A549 (cell line): ENCODE measurements at regions of chr5 and their contacts with region 1.

Region 1: DNA sequence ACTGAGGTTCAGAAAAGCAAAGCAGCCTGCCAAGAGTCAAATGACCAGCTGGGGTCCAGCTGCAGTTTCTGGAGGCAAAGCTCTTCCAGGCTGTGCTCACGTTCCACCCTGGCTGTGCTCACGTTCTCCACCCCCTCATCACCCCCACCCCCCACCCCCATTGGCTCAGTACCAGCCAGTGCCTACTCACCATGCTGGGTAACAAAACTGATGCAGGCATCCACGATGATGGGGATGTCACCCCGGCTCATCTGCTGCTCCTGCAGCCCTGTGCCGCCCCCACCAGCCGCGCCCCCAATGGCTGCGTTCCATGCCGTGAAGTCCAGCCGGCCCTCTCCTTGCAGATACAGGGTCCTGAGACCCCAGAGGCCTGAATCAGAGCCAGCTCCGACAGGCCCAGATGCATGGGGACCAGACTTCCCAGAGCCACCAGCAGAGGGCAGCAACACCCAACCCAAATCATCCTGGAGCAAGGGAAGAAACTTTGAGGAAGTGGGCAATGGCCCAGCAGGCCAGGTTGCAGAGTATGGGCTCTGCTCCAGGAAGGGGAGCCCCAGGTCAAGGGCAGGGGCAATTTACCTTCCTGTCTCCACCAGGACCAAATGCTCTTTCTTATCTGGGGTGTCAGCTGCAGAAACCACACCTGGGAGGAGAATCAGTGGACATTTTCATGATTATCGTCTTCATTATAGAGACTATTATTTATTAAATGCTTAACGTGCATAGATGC is 13.7 kb upstream of the FCHSD1 start:
- DNase-seq: peak; percentile 69 to 78
- ATAC-seq: peak; percentile 89 to 97
- H3K4me3 ChIP-seq: no peak overlapping the region
- H3K27ac ChIP-seq: no peak overlapping the region
- H3K4me1 ChIP-seq: peaks cover 4% of the 10 kb centered on the region; the same call in 1 of the 3 replicates
- CTCF ChIP-seq: peak; percentile 91
- EP300 ChIP-seq: no peak
- POLR2A ChIP-seq: no peak
- RAD21 ChIP-seq: peak; percentile 84

Region 2: DNA sequence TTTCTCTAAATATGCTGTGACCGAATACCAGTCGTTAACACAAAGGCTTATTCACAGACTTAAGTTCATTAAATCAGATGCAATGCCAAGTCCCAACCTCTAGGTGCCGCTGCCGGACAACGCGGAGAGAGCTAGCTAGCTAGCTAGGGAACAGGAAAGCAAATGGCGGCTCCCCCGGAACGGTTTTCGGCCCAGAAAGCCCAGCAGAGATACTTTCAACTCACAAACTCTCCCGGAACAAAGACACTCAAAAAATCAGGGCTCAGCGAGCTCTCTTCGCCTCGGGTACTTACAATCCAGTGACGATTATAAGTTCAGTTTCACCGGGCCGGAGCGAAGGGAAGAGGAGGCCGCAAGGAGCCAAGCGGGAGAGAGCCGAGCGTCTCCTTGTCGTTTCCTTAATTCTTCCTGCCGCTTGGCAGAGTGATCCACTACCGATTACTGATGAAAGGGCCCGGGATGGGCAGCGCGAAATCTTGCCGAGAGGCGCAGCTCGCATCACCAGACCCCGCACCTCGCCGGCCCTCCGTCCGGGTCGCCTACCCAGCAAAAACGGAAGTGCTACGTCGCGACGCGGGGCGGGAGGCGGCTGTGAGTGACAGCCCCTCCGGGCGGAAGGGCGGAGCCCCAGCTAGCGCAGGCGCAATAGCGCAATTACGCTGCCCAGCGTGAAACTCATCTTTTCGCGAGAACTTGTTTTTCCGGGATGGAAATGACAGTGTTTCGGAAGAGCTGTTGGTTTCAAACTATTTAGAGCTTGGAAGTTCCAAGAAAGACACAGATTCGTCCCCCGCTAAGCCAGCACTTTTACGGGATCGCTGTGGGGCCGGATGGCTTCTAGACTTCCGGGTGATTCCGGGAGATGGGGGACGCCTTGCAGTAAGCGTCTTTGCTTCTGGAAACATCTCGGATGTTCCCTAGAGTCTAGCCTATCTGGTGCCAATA is 344.4 kb before region 1 on chr5 and contains the start of gene TAF7:
- CTCF ChIA-PET with region 1: no interaction called
- POLR2A ChIA-PET with region 1: no interaction called
- DNase-seq: peak; percentile 75 to 96
- ATAC-seq: peak; percentile 97 to 98
- H3K4me3 ChIP-seq: peak within 1 kb of the TSS; percentile 68
- H3K27ac ChIP-seq: peak within 1 kb of the TSS; percentile 84 to 93
- H3K4me1 ChIP-seq: no peaks in the 10 kb centered on the region
- CTCF ChIP-seq: peak; percentile 78
- EP300 ChIP-seq: no peak
- POLR2A ChIP-seq: peak; percentile 79
- RAD21 ChIP-seq: no peak; a peak in 1 of 5 replicates
- polyA plus RNA-seq, gene TAF7: 78.1 and 90.6 TPM in 2 replicates

Region 3: DNA sequence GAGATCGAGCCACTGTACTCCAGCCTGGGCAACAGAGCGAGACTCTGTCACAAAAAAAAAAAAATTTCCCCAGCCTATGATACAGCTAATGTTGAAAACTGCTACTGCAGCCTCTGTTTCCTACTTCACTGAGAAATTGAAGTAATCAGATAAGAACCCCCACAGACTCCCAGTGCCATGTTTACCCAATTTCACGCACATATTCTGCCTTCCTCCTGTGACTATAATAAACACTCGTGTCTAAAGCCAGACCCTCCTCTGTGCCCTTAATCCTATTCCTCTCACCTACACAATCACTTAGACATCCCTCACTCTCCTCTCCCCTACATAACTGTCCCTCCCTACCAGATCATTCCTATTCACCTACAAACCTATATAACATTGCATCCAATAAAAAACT is 10.8 kb after region 1 on chr5:
- CTCF ChIA-PET with region 1: interaction called, 41 read pairs
- POLR2A ChIA-PET with region 1: no interaction called
- DNase-seq: no peak
- ATAC-seq: no peak
- H3K4me3 ChIP-seq: no peak overlapping the region
- H3K27ac ChIP-seq: no peak overlapping the region
- H3K4me1 ChIP-seq: peaks cover 2% of the 10 kb centered on the region
- CTCF ChIP-seq: no peak
- EP300 ChIP-seq: no peak
- POLR2A ChIP-seq: no peak
- RAD21 ChIP-seq: no peak

Region 4: DNA sequence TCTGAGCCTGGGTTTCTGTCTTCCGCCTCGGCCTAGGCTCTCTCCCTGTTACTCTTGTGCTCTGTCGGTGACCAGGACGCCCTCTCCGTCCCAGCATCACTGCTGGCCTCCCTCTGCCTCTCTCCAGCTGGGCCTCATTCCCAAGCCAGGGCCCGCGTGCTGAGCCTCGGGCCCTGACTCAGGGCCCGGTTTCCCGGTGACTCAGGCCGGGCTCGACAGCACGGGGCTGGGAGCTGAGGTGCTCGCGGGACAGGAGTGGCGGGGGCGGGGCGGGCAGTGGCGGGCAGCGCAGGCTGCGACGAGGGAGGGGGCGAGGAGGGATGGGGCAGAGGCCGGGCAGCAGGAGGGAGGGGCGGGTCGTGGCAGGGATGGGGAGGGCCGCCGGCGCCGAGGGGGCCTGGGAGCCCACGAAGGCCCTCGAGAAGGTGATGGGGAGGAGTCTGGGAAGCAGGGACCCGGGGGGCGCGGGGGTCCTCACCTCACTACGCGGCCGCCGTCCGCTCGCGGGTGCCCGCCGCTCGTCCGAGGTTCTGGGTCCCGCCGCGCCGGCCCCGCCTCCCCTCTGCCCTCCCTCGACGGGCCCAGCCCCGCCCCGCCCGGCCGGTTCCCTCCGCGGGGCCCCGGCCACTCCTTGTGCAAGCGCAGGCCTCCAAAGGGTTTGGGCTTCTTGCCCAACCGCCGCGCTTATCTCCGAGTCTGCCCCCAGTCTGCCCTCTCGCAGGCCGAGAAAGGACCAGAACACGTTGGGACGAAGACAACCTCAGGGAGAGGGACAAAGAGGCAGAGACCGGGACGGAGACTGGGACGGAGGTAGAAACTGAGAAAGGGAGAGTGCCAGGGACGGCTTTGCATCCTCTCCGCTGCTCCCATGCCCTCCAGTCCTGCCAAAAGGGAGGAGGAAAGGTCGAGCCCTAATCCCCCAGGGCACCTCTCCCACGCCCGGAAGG is 17.1 kb after region 1 on chr5 and contains the start of gene ARAP3:
- CTCF ChIA-PET with region 1: interaction called, 41 read pairs
- POLR2A ChIA-PET with region 1: no interaction called
- DNase-seq: peak; percentile 69 to 75
- ATAC-seq: peak; percentile 87 to 93
- H3K4me3 ChIP-seq: peak within 1 kb of the TSS; percentile 49
- H3K27ac ChIP-seq: peak within 1 kb of the TSS; percentile 88 to 98
- H3K4me1 ChIP-seq: peaks cover 24% of the 10 kb centered on the region
- CTCF ChIP-seq: no peak
- EP300 ChIP-seq: no peak
- POLR2A ChIP-seq: peak; percentile 40
- RAD21 ChIP-seq: no peak
- polyA plus RNA-seq, gene ARAP3: 3.0 and 4.5 TPM in 2 replicates

Region 5: DNA sequence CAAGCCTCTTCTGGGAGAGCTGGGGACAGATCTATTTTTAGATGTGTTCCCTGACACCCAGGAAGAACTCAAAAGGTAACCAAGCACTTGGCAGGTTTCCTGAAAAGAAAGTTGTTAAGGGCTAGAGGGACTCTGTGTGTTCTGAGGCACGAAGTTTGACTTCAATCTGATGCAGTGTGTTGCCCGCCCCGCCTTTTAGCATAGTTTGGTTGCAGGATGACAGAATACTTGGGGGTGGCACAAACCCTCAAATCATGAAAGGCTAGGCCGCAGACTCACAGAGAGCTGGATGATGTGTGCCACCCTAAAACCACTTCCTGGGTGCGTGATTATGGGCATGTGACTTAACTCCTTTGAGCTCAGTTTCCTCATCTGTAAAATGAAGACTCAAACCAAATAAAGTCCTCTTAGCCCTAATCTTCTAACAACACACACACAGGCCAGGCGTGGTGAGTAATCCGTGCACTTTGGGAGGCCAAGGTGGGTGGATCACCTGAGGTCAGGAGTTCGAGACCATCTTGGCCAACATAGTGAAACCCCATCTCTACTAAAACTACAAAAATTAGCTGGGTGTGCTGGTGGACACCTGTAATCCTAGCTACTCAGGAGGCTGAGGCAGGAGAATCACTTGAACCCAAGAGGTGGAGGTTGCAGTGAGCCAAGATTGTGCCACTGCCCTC is 430.9 kb after region 1 on chr5:
- CTCF ChIA-PET with region 1: no interaction called
- POLR2A ChIA-PET with region 1: no interaction called
- DNase-seq: no peak
- ATAC-seq: no peak
- H3K4me3 ChIP-seq: no peak overlapping the region
- H3K27ac ChIP-seq: no peak overlapping the region
- H3K4me1 ChIP-seq: no peaks in the 10 kb centered on the region
- CTCF ChIP-seq: no peak
- EP300 ChIP-seq: no peak
- POLR2A ChIP-seq: no peak
- RAD21 ChIP-seq: no peak